BJ (cell line): ENCODE measurements at regions of chr9 and their contacts with region 1.

Region 1: DNA sequence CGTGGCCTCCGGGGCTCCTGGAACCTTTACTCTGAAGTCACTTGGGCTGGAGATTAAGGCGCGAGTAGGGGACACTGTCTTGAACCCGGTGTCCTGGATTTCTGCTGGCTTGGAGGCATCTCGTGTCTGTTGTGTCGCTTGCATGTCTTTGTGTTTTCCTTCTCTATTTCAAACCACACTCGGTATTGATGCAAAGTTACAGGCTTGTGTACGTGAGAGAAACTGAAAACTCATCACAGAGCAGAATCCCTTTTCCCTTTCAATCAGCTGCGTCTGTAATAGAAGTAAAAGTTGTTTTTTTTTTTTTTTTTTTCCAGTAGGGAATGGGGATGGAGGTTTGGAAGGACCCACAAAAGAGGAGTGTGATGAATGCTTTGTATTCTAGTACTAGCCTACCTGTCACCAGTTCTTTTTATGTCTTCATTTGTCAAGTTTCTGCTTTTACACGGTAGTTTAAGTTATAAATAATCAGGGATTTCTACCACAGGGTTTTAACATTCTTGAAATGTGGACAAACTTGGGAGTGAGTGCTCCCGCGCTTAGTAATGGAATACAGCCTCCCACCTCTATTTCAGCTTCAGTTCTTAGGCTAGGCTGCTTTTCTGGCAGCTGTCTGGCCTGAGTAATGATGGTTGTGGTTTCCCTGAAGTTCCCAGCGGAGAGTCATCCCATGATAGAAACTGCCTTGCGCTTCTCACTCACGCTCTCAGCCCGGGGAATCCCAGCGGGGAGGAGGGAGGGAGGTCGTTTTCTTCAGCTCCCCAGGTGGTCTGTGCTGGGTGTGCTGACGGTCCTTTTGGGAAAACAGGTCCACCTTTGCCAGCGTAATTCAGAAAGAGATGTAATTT is 763 bp downstream of the TJP2 start:
- DNase-seq: peak; percentile 88
- H3K4me3 ChIP-seq: peak overlapping the region; percentile 48
- H3K27me3 ChIP-seq: no peaks in the 10 kb centered on the region
- CTCF ChIP-seq: no peak

Region 2: GRCh38 chr9:69193685-69194032 is 18.8 kb after region 1 on chr9:
- CTCF ChIA-PET with region 1: interaction called, 21 read pairs
- POLR2A ChIA-PET with region 1: no interaction called
- DNase-seq: no peak
- H3K4me3 ChIP-seq: no peak overlapping the region
- H3K27me3 ChIP-seq: no peaks in the 10 kb centered on the region
- CTCF ChIP-seq: no peak